Activated B cell treated with CpG ODN at 0.5 μM for 24 hours (primary cell): ENCODE measurements at regions of chr10 and their contacts with region 1.

Region 1: GRCh38 chr10:71835671-71836595 is 15.1 kb downstream of the PSAP start:
- DNase-seq: peak; percentile 84
- ATAC-seq: peak; percentile 92
- H3K4me3 Mint-ChIP-seq: peak overlapping the region; percentile 79
- H3K27ac Mint-ChIP-seq: peak overlapping the region; percentile 95
- H3K4me1 Mint-ChIP-seq: peaks cover 88% of the 10 kb centered on the region
- H3K27me3 Mint-ChIP-seq: no peaks in the 10 kb centered on the region
- CTCF ChIP-seq: no peak

Region 2: GRCh38 chr10:71319042-71319799 is 516.7 kb before region 1 on chr10 and contains the start of gene SLC29A3:
- CTCF ChIA-PET with region 1: no interaction called
- POLR2A ChIA-PET with region 1: no interaction called
- intact Hi-C with region 1: loop called (anchors 1 kb)
- DNase-seq: peak; percentile 72
- ATAC-seq: peak; percentile 90
- H3K4me3 Mint-ChIP-seq: peak within 1 kb of the TSS; percentile 96
- H3K27ac Mint-ChIP-seq: peak within 1 kb of the TSS; percentile 80
- H3K4me1 Mint-ChIP-seq: peaks cover 13% of the 10 kb centered on the region
- H3K27me3 Mint-ChIP-seq: no peaks in the 10 kb centered on the region
- CTCF ChIP-seq: no peak
- total RNA-seq, gene SLC29A3: 3.1 and 4.3 TPM in 2 replicates

Region 3: GRCh38 chr10:71666639-71667386 is 169.1 kb before region 1 on chr10:
- CTCF ChIA-PET with region 1: no interaction called
- POLR2A ChIA-PET with region 1: no interaction called
- intact Hi-C with region 1: no loop called
- DNase-seq: no peak
- ATAC-seq: peak; percentile 60
- H3K4me3 Mint-ChIP-seq: no peak overlapping the region
- H3K27ac Mint-ChIP-seq: no peak overlapping the region
- H3K4me1 Mint-ChIP-seq: peaks cover 17% of the 10 kb centered on the region
- H3K27me3 Mint-ChIP-seq: no peaks in the 10 kb centered on the region
- CTCF ChIP-seq: no peak

Region 4: DNA sequence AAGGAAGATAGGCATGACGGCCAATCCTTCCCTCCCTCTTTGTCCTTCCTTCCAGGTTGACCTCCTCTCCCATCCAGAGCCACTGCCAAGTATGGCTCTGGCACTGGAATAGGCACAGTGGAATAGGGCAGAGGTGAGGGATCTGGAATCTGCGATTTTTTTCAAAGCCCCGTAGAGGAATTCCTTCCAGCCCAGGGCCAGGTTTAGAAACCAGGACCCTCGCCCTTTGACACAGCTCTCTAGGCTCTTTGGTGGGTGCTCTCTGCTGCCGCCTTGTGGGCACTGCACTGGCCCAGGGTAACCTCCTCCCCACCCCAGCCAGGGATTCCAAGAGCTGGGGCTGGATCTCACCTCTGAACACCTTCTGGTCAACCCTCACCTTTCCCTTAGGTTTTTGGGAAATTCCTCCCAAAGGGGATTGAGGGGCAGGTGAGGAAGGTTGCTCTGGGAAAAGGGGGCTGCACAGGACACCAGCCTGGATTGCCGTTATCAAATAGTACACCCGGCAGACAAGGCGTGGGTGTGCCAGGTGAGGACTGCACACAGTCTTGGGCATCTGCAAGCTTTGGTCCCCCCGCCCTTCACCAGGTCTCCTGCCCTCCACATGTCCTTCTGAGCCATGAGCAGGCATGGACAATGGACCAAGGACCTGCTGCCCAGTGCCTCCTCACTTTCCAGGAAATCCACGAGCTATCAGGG is 139.2 kb before region 1 on chr10:
- CTCF ChIA-PET with region 1: interaction called, 4 read pairs
- POLR2A ChIA-PET with region 1: interaction called, 8 read pairs
- intact Hi-C with region 1: loop called (anchors 1 kb)
- DNase-seq: peak; percentile 59
- ATAC-seq: no peak
- H3K4me3 Mint-ChIP-seq: no peak overlapping the region
- H3K27ac Mint-ChIP-seq: no peak overlapping the region
- H3K4me1 Mint-ChIP-seq: peaks cover 63% of the 10 kb centered on the region
- H3K27me3 Mint-ChIP-seq: no peaks in the 10 kb centered on the region
- CTCF ChIP-seq: peak; percentile 27

Region 5: DNA sequence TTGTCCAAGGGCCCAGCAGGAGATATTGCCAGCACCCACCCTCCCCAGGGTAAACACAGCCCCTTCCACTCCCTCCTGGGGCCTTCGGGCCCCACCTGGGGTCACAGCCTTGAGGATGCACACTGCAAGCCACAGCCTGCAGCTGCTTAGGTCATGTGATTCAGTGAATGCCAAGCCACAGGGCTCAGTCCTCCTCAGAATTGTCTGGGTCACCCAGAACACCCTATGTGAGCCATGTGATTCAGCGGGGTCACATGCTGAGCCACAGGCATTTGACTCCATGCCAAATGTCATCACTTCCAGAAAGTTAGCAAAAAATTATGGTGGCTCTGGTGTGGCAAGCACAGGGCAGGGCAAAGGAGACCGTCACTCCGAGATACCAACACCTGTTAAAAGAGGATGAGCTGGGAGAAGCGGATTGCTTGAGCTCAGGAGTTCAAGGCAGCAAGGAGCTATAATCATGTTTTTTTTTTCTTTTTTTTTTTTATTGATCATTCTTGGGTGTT is 32.3 kb after region 1 on chr10:
- CTCF ChIA-PET with region 1: interaction called, 3 read pairs
- POLR2A ChIA-PET with region 1: interaction called, 28 read pairs
- intact Hi-C with region 1: loop called (anchors 1 kb)
- DNase-seq: no peak
- ATAC-seq: peak; percentile 10
- H3K4me3 Mint-ChIP-seq: no peak overlapping the region
- H3K27ac Mint-ChIP-seq: no peak overlapping the region
- H3K4me1 Mint-ChIP-seq: peaks cover 19% of the 10 kb centered on the region
- H3K27me3 Mint-ChIP-seq: no peaks in the 10 kb centered on the region
- CTCF ChIP-seq: no peak

Region 6: GRCh38 chr10:71888623-71889387 is 52.9 kb after region 1 on chr10:
- CTCF ChIA-PET with region 1: interaction called, 85 read pairs
- POLR2A ChIA-PET with region 1: interaction called, 13 read pairs
- intact Hi-C with region 1: loop called (anchors 1 kb)
- DNase-seq: peak; percentile 82
- ATAC-seq: peak; percentile 94
- H3K4me3 Mint-ChIP-seq: peak overlapping the region; percentile 87
- H3K27ac Mint-ChIP-seq: peak overlapping the region; percentile 92
- H3K4me1 Mint-ChIP-seq: peaks cover 39% of the 10 kb centered on the region
- H3K27me3 Mint-ChIP-seq: no peaks in the 10 kb centered on the region
- CTCF ChIP-seq: no peak